HepG2 (cell line): ENCODE measurements at regions of chr1 and their contacts with region 1.

Region 1: DNA sequence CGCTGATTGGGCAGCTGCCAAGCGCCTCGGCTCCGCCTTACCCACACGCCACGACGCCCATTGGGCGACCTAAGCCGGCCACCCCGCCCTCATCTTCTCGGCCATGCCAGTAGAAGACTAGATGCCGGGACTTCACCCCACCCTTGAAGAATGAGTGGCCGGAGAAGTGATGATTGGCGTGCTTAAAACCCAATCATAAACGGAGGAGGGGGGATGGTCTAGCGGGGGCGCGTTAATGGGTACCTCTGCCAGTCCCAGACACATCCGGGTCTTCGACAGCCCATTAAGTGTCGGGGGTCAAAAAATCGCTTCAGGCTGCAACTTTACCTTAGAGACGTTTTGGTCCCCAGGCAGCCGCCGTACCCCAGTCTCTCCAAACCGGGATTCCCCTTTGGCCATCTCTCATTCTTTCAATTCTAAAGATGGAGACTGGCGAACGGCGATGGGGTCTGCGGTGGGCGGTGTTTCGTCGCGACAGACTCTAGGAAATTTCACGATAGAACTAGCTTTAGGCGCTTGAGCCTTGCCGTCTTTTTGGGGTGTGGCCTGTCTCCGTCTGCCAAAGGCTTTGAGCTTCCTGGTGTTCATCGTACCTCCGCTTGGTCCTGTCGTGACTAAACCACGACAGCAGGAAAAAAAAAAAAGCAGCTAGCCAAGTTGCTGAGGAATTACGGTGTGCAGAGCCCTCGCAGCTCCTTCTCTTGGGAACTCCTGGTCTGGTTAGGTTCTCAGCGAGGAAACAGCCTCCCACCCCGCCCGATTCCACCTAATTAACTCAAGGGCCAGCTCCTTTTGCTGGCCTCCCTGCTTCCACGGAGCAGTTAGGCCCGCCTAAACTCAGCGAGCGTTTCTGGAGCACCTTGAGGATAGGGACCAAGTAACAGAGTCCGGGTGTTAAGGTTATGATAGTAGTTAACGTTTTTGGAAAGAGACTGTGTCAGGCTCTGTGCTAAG is at the start of gene GATAD2B:
- DNase-seq: peak; percentile 99
- ATAC-seq: peak; percentile 95
- H3K4me3 ChIP-seq: peak within 1 kb of the TSS; percentile 80
- H3K27ac ChIP-seq: peak within 1 kb of the TSS; percentile 83
- H3K4me1 ChIP-seq: peaks cover 37% of the 10 kb centered on the region
- H3K27me3 ChIP-seq: no peaks in the 10 kb centered on the region; a peak in 2 of 5 replicates
- CTCF ChIP-seq: no peak
- EP300 ChIP-seq: no peak; a peak in 1 of 4 replicates
- POLR2A ChIP-seq: peak; percentile 34 to 61; a peak in 2 of 4 replicates
- RAD21 ChIP-seq: no peak; the same call in 1 of the 2 replicates
- total RNA-seq, gene GATAD2B: 3.2 and 5.3 TPM in 2 replicates

Region 2: GRCh38 chr1:153827168-153827964 is 95.9 kb before region 1 on chr1:
- CTCF ChIA-PET with region 1: no interaction called
- POLR2A ChIA-PET with region 1: no interaction called
- in situ Hi-C with region 1: no loop called
- intact Hi-C with region 1: loop called (anchors 10 kb)
- DNase-seq: no peak
- ATAC-seq: no peak
- H3K4me3 ChIP-seq: no peak overlapping the region
- H3K27ac ChIP-seq: no peak overlapping the region
- H3K4me1 ChIP-seq: no peaks in the 10 kb centered on the region
- H3K27me3 ChIP-seq: no peaks in the 10 kb centered on the region
- CTCF ChIP-seq: no peak
- EP300 ChIP-seq: no peak
- POLR2A ChIP-seq: no peak
- RAD21 ChIP-seq: no peak

Region 3: DNA sequence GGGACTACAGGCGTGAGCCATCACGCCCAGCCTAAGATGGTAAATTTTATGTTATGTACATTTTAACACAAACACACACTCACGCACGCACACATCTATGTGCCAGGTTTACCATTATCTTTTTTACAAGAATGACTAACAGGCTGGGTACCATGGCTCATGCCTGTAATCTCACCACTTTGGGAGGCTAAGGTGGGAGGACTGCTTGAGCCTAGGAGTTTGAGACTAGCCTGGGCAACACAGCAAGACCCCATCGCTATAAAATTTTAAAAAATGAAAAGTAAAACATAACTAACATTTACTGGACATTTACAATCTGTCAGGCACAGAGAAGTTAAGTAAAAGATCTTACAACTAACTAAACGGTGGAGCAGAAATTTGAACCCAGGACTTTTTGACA is 15.2 kb before region 1 on chr1:
- CTCF ChIA-PET with region 1: no interaction called
- POLR2A ChIA-PET with region 1: interaction called, 10 read pairs
- in situ Hi-C with region 1: no loop called
- intact Hi-C with region 1: no loop called
- DNase-seq: no peak
- ATAC-seq: no peak
- H3K4me3 ChIP-seq: no peak overlapping the region
- H3K27ac ChIP-seq: no peak overlapping the region
- H3K4me1 ChIP-seq: no peaks in the 10 kb centered on the region; the same call in 1 of the 2 replicates
- H3K27me3 ChIP-seq: no peaks in the 10 kb centered on the region
- CTCF ChIP-seq: no peak
- EP300 ChIP-seq: no peak
- POLR2A ChIP-seq: no peak
- RAD21 ChIP-seq: no peak

Region 4: GRCh38 chr1:153958111-153958960 is 35.1 kb after region 1 on chr1 and contains the start of gene CRTC2:
- CTCF ChIA-PET with region 1: no interaction called
- POLR2A ChIA-PET with region 1: interaction called, 16 read pairs
- in situ Hi-C with region 1: no loop called
- intact Hi-C with region 1: loop called (anchors 5 kb)
- DNase-seq: peak; percentile 96
- ATAC-seq: peak; percentile 81
- H3K4me3 ChIP-seq: peak within 1 kb of the TSS; percentile 89 to 99 (median 92)
- H3K27ac ChIP-seq: peak within 1 kb of the TSS; percentile 75
- H3K4me1 ChIP-seq: peaks cover 67% of the 10 kb centered on the region
- H3K27me3 ChIP-seq: peaks cover 0 to 7% of the 10 kb centered on the region in 2 experiments; a peak in 1 of 5 replicates
- CTCF ChIP-seq: peak; percentile 40; the same call in 1 of the 2 replicates
- EP300 ChIP-seq: no peak; a peak in 1 of 4 replicates
- POLR2A ChIP-seq: peak in 1 of 2 experiments; percentile 71; a peak in 3 of 4 replicates
- RAD21 ChIP-seq: 0 out of 2 replicates have a peak, but pooled peaks have one; percentile 27
- total RNA-seq, gene CRTC2: 4.0 and 6.1 TPM in 2 replicates

Region 5: DNA sequence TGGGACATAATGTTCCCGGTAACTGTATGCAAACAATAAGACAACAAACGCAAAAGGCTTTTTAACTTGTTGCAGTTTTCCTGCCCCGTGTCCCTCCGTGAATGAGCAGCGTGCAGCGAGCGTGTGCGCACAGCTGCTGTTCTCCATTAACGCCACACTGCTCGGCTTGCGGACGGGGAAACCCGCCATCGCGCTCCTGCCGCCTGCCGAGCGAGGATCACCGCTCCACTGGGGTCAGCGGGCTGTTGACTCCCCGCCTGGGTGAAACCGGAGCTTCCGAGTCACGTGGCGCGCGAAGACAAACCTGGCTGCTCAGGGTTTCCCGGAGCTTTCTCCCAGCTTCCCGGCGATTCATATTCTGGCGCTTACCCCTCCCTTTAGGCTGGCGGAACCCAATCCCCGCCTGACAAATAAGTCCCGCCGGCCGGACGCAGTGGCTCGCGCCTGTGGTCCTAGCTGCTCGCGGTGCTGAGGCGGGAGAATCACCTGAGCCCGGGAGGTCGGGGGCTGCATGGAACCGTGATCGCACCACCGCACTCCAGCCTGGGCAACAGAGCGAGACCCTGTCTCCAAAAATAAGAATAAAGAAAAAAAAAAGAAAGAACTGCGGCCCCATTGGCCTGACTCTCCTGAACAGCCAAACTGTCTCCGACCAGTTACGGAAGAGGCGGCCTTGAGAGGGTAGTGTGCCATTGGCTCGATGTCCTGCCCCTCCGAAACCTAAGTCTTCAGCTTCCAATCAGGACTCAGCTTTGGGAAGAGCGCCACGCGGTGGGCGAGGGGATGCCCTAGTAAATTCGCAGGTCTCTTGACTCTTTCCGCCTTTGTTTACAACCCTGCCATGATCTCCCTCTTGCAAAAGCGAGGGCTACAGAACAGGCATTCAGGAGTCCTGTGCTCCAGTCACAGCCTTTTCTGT is 44.1 kb after region 1 on chr1 and contains the start of gene CREB3L4:
- CTCF ChIA-PET with region 1: no interaction called
- POLR2A ChIA-PET with region 1: interaction called, 28 read pairs
- in situ Hi-C with region 1: no loop called
- intact Hi-C with region 1: no loop called
- DNase-seq: peak; percentile 97
- ATAC-seq: peak; percentile 86
- H3K4me3 ChIP-seq: peak within 1 kb of the TSS; percentile 62 to 82 (median 72)
- H3K27ac ChIP-seq: peak within 1 kb of the TSS; percentile 83
- H3K4me1 ChIP-seq: peaks cover 30% of the 10 kb centered on the region
- H3K27me3 ChIP-seq: no peaks in the 10 kb centered on the region; a peak in 1 of 5 replicates
- CTCF ChIP-seq: peak; percentile 81
- EP300 ChIP-seq: 0 out of 4 replicates have a peak, but pooled peaks of 1 of the 2 experiments have one; percentile 17
- POLR2A ChIP-seq: peak; percentile 93 to 96
- RAD21 ChIP-seq: peak; percentile 63; the same call in 1 of the 2 replicates
- total RNA-seq, gene CREB3L4: 7.8 and 9.9 TPM in 2 replicates

Region 6: GRCh38 chr1:153977250-153978240 is 54.3 kb after region 1 on chr1 and contains the start of gene JTB:
- CTCF ChIA-PET with region 1: no interaction called
- POLR2A ChIA-PET with region 1: interaction called, 17 read pairs
- in situ Hi-C with region 1: no loop called
- intact Hi-C with region 1: no loop called
- DNase-seq: peak; percentile 83
- ATAC-seq: peak; percentile 94
- H3K4me3 ChIP-seq: peak within 1 kb of the TSS; percentile 72 to 79 (median 77)
- H3K27ac ChIP-seq: peak within 1 kb of the TSS; percentile 88
- H3K4me1 ChIP-seq: peaks cover 25% of the 10 kb centered on the region
- H3K27me3 ChIP-seq: no peaks in the 10 kb centered on the region
- CTCF ChIP-seq: no peak; the same call in 1 of the 2 replicates
- EP300 ChIP-seq: no peak
- POLR2A ChIP-seq: peak; percentile 86 to 88
- RAD21 ChIP-seq: 0 out of 2 replicates have a peak, but pooled peaks have one; percentile 30
- total RNA-seq, gene JTB: 66.8 and 99.2 TPM in 2 replicates